ENCODE measurements at regions of chr19 and their contacts with region 1.

Region 1: DNA sequence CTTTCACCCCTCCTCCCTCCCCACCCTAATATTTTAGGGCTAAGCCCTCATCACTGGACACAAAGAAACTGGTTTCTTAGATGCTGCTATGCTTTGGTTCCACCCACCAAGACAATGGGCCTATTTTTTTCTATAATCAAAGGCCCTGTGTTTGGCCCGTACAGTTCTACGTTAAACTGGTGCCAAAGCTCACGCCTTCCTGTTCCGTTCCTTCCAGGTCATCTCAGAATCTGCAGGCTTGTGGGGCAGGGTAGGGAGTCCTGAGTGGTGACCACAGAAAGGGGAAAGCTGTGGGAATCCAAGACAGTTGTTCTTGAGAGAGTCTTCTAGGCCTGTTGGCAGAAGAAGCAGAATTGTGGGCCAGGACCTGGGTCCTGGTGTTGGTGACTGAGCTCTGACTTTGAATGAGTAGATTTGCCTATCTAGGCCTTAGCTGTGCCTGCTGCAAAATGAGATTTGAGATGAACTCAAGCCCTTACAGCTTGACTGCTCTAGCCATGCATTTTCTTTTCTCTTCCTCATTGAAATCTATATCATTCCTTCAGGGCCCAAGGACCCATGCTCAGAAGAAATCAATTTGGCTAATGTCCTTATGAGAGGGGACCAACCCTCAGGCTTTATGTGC is 19.1 kb upstream of the CXCL17 start:
- DNase-seq: peak in 1 of 2 donors; percentile 12
- ATAC-seq: peak in 7 of 8 donors; percentile 23 to 85 (median 58)
- H3K4me3 ChIP-seq: no peak overlapping the region
- H3K27ac ChIP-seq: peak overlapping the region in 3 of 10 donors; percentile 6 to 50 (median 37)
- H3K4me1 ChIP-seq: peaks cover 0 to 35% (median 15%) of the 10 kb centered on the region in 9 donors
- H3K27me3 ChIP-seq: no peaks in the 10 kb centered on the region
- CTCF ChIP-seq: no peak

Region 2: DNA sequence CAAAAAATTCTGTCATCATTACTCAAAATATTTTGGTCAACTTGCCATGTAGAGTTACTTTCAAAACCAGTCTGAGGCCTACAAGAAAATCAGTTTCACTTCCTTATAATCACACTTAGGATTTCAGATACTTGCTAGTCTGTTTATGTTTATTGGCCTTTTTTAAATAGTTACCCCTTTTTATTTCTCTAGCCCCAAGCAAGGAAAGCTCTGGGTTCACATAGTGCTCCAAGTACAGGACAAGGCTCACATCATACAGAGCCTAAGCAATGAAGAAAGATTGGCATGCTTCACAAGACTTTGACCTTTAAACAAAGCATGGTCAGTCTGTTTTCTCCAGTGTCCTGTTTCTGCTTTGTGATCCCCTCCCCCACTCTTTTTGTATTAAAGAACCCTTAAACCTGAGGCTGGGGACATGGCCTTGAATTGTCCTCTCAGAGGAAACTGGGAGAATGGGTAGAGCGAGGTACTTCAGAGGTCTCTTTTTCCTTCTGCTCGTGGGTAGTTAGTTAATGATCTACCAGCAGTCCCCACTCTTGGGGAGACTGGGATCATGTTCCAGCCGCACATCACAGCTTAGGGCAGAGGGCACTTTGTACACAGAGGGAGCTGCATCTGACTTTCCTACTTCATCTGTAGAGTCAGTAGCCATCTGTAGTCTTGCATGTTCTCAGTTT is 35.8 kb after region 1 on chr19:
- intact Hi-C with region 1: loop called in 1 of 10 experiments (anchors 5 kb)
- DNase-seq: no peak
- ATAC-seq: peak in 1 of 8 donors; percentile 33
- H3K4me3 ChIP-seq: no peak overlapping the region
- H3K27ac ChIP-seq: peak overlapping the region in 4 of 10 donors; percentile 28 to 80 (median 34)
- H3K4me1 ChIP-seq: peaks cover 0 to 35% (median 23%) of the 10 kb centered on the region in 9 donors
- H3K27me3 ChIP-seq: no peaks in the 10 kb centered on the region
- CTCF ChIP-seq: no peak

Measured in heart right ventricle (tissue), 16 donors.